ENCODE measurements at regions of chr19 and their contacts with region 1.

Region 1: DNA sequence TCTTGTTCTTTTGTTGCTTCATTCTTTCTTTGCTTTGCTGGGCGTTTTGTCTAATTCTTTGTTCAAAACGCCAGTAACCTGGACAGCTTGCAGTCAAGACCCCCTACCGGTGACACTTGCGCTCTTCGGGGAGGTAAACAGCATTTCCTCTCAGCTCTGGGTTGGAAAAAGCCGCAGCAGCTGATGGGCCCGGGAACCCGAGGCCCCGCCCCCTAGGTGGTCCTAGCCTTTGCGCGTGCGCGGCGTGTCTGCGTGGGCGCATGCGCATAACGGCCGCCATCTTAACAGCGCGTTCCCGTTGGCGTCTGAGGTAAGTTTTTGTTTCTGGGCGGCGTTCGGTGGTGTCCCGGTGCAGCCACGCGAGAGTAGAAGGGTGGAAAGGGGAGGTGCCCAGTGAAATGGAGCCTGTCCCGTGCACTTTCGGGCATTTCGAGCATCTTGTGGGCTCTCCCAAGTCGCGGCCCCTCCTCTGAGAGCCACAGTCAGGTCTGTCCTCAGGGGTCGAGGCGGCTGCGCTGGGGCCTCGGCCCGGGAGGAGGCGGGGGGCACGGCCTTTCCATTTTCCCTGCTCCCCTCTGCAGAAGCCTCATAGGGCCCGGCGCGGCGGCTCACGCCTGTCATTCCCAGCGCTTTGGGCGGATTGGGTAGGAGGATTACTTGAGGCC is at the start of gene ZNF559:
- DNase-seq: peak; percentile 95 to 98 (median 97)
- H3K4me3 ChIP-seq: peak within 1 kb of the TSS; percentile 62 to 83
- H3K4me3 Mint-ChIP-seq: peak within 1 kb of the TSS; percentile 88 to 98 (median 95)
- H3K27ac ChIP-seq: peak within 1 kb of the TSS; percentile 67
- H3K27ac Mint-ChIP-seq: peak within 1 kb of the TSS; percentile 91 to 97 (median 97)
- H3K4me1 ChIP-seq: peaks cover 20% of the 10 kb centered on the region
- H3K4me1 Mint-ChIP-seq: peaks cover 18 to 39% (median 22%) of the 10 kb centered on the region in 4 donors
- H3K27me3 ChIP-seq: no peaks in the 10 kb centered on the region
- H3K27me3 Mint-ChIP-seq: no peaks in the 10 kb centered on the region
- total RNA-seq, gene ZNF559: 47.4 to 53.5 TPM

Region 2: GRCh38 chr19:8832132-8833021 is 491.7 kb before region 1 on chr19 and contains the starts of genes MBD3L1 and ZNF558:
- CTCF ChIA-PET with region 1: no interaction called
- POLR2A ChIA-PET with region 1: no interaction called
- intact Hi-C with region 1: loop called (anchors 10 kb)
- DNase-seq: peak; percentile 100
- H3K4me3 ChIP-seq: peak within 1 kb of the TSS; percentile 79 to 84
- H3K4me3 Mint-ChIP-seq: peak within 1 kb of the TSS; percentile 83 to 98 (median 92)
- H3K27ac ChIP-seq: peak within 1 kb of the TSS; percentile 81
- H3K27ac Mint-ChIP-seq: peak within 1 kb of the TSS; percentile 96 to 99 (median 98)
- H3K4me1 ChIP-seq: peaks cover 15% of the 10 kb centered on the region
- H3K4me1 Mint-ChIP-seq: peaks cover 21 to 30% (median 25%) of the 10 kb centered on the region in 4 donors
- H3K27me3 ChIP-seq: no peaks in the 10 kb centered on the region
- H3K27me3 Mint-ChIP-seq: no peaks in the 10 kb centered on the region
- total RNA-seq, gene MBD3L1: not detected
- total RNA-seq, gene ZNF558: 44.6 to 45.3 TPM

Region 3: GRCh38 chr19:9309139-9309973 is 14.7 kb before region 1 on chr19 and contains the start of gene ZNF699:
- CTCF ChIA-PET with region 1: interaction called, 23 read pairs
- POLR2A ChIA-PET with region 1: interaction called, 30 read pairs
- intact Hi-C with region 1: loop called (anchors 1 kb)
- DNase-seq: peak; percentile 97 to 100 (median 97)
- H3K4me3 ChIP-seq: peak within 1 kb of the TSS; percentile 92 to 93
- H3K4me3 Mint-ChIP-seq: peak within 1 kb of the TSS; percentile 89 to 99 (median 94)
- H3K27ac ChIP-seq: peak within 1 kb of the TSS; percentile 96
- H3K27ac Mint-ChIP-seq: peak within 1 kb of the TSS; percentile 88 to 99 (median 97)
- H3K4me1 ChIP-seq: peaks cover 23% of the 10 kb centered on the region
- H3K4me1 Mint-ChIP-seq: peaks cover 21 to 47% (median 34%) of the 10 kb centered on the region in 4 donors
- H3K27me3 ChIP-seq: no peaks in the 10 kb centered on the region
- H3K27me3 Mint-ChIP-seq: no peaks in the 10 kb centered on the region
- total RNA-seq, gene ZNF699: 20.9 to 22.1 TPM

Region 4: DNA sequence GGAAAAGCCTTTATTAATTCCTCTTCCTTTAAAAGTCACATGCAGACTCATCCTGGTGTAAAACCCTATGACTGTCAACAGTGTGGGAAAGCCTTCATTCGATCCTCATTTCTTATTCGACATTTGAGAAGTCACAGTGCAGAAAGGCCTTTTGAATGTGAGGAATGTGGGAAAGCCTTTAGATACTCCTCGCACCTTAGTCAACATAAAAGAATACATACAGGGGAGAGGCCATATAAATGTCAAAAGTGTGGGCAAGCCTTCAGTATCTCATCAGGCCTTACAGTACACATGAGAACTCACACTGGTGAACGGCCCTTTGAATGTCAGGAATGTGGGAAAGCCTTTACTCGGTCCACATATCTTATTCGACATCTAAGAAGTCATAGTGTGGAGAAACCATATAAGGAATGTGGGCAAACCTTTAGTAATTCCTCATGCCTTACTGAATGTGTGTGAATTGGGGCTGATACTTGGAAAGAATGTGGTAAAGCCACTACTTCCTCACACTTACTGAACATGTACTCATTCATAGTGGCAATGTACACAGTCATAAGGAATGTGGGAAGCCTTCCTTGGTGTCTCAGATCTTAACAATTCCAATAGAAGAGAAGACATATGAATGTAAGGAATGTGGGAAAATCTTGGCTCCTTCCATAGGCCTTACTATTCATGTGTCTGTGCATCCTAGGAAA is 18.7 kb after region 1 on chr19:
- CTCF ChIA-PET with region 1: no interaction called
- POLR2A ChIA-PET with region 1: no interaction called
- intact Hi-C with region 1: no loop called
- DNase-seq: no peak
- H3K4me3 ChIP-seq: peak overlapping the region in 1 of 2 donors; percentile 2
- H3K4me3 Mint-ChIP-seq: no peak overlapping the region
- H3K27ac ChIP-seq: no peak overlapping the region
- H3K27ac Mint-ChIP-seq: no peak overlapping the region
- H3K4me1 ChIP-seq: no peaks in the 10 kb centered on the region
- H3K4me1 Mint-ChIP-seq: peaks cover 0 to 3% (median under 1%) of the 10 kb centered on the region in 4 donors
- H3K27me3 ChIP-seq: no peaks in the 10 kb centered on the region
- H3K27me3 Mint-ChIP-seq: no peaks in the 10 kb centered on the region

Region 5: DNA sequence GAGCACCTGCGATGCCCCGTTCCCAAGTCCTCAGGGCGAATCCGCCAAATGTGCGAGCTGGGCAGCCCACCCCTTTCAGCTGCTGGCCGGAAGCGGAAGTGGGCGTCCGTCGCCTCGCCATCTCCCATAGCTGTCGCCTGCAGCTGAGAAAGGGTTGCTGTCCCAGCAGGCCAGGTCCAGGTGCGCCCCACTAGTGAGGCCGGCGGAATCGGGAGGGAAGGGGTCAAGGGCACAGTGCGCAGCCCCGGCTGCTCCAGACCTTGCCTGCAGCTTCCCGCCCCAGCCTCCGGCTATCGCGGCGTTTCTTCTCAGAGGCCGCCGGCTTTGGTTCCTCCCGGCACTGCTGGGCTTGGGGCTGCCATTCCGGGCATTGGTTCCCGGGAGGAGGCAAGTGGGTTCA is 38.9 kb after region 1 on chr19 and contains the start of gene ZNF177:
- CTCF ChIA-PET with region 1: no interaction called
- POLR2A ChIA-PET with region 1: no interaction called
- intact Hi-C with region 1: no loop called
- DNase-seq: no peak
- H3K4me3 ChIP-seq: no peak within 1 kb of the TSS
- H3K4me3 Mint-ChIP-seq: peak within 1 kb of the TSS in 3 of 8 donors; percentile 12 to 46 (median 13)
- H3K27ac ChIP-seq: no peak within 1 kb of the TSS
- H3K27ac Mint-ChIP-seq: no peak within 1 kb of the TSS
- H3K4me1 ChIP-seq: no peaks in the 10 kb centered on the region
- H3K4me1 Mint-ChIP-seq: peaks cover 0 to 2% (median 0%) of the 10 kb centered on the region in 4 donors
- H3K27me3 ChIP-seq: no peaks in the 10 kb centered on the region
- H3K27me3 Mint-ChIP-seq: peaks cover 6 to 7% of the 10 kb centered on the region in 2 donors
- total RNA-seq, gene ZNF177: 1.7 to 3.6 TPM